Ovary (tissue), 10 donors: ENCODE measurements at regions of chr4 and their contacts with region 1.

Region 1: DNA sequence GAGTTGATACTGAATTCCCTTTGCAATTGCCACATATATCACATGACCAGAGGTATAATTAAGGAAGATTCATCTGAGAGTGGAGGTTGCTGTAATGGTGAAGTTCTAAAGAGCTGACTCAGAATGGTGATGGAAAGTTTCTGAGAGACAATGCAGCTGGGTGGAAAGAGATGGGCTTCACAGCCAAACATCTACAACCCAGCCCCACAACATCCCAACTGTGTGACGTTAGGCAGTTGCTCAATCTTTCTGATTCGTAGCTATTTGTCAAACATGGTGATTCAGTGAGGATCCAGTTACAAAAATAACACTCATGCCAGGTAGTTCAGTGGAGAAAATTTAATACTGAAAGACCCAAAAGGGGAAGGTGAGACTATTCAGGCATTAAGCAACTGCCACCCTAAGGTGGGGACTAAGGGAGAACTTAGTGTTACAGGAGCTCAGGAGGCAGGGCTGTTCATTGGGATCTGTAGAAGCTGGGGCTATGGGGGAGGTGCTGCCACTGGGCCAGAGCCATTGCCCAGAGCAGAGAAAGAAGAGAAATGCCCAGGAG is 6.9 kb upstream of the AFF1 start:
- DNase-seq: peak in 2 of 5 donors; percentile 35 to 77
- H3K4me3 ChIP-seq: no peak overlapping the region
- H3K27ac ChIP-seq: no peak overlapping the region
- H3K4me1 ChIP-seq: no peaks in the 10 kb centered on the region
- H3K27me3 ChIP-seq: no peaks in the 10 kb centered on the region
- CTCF ChIP-seq: no peak
- EP300 ChIP-seq: peak; percentile 84
- POLR2A ChIP-seq: no peak

Region 2: DNA sequence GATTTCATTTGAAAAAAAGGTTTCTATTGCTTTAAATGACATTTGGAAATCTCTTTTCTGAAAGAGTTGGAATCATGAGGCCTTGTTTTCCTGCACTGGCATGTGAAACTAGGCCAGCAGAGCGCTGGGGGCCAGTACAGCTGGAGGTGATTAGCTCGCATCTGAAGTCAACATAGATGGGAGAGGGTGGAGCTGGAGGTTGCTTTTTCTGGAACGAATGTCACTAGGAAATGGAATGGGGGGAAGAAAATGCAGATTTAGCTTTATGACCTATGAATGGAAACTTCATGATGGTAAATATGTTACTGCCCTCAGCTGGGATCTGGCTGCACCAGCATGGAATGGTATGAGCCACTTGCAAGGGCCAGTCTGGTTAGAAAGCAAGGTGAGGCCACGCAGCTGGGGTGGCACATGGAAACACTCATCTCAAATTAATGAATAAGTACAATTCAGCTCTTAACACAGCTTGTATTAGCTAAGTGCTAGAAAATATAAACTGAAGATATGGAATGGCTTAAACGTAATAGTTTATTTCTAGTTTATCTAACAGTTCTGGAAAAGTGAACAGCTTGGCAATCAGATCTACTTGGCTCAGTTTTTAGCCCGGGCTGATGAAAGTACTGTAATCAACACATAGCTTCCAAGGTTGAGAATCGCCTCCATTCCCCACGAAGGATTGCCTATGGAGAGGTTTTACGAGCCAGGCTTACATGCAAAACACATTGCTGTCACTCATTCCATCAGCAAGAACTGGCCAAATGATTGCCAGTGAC is 111.2 kb before region 1 on chr4:
- intact Hi-C with region 1: no loop called
- DNase-seq: peak; percentile 49 to 66 (median 56)
- H3K4me3 ChIP-seq: no peak overlapping the region
- H3K27ac ChIP-seq: peak overlapping the region; percentile 25 to 79
- H3K4me1 ChIP-seq: peaks cover 1% of the 10 kb centered on the region
- H3K27me3 ChIP-seq: no peaks in the 10 kb centered on the region
- CTCF ChIP-seq: no peak
- EP300 ChIP-seq: no peak
- POLR2A ChIP-seq: no peak

Region 3: DNA sequence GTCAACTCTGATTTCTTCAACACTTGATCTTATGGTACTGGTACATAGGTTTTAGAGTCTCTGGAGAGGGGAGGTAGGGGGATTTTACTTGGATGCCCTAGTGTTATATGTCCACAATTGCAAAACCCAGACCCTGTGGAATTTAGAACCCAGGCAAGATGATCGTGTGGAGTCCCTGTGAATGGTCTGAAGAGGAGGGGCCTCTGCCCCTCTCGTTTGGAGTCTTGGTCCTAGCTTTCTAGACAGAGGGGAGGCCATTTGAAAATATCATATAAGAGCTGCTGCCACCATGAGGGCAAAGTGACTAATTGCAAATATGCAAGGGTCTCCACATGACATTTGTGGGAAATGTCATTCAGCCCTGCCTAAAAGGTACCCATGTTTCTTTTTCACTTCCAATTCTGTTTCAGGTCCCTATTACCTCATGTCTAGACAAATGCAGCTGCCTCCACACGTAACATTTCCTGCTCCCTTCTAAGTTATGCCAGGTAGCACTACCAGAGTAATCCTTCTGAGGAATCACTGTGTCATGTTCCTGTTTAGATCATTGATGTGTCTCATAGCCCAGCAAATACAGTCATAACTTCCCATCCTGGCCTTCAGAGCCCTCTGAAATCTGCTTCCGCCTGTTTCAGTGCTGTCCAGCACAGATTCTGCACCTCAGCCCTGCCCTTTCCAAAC is 165.7 kb after region 1 on chr4:
- intact Hi-C with region 1: loop called (anchors 5 to 10 kb)
- DNase-seq: peak in 2 of 5 donors; percentile 37
- H3K4me3 ChIP-seq: no peak overlapping the region
- H3K27ac ChIP-seq: peak overlapping the region in 1 of 2 donors; percentile 18
- H3K4me1 ChIP-seq: peaks cover 2% of the 10 kb centered on the region
- H3K27me3 ChIP-seq: no peaks in the 10 kb centered on the region
- CTCF ChIP-seq: peak; percentile 13 to 54 (median 52)
- EP300 ChIP-seq: no peak
- POLR2A ChIP-seq: no peak

Region 4: DNA sequence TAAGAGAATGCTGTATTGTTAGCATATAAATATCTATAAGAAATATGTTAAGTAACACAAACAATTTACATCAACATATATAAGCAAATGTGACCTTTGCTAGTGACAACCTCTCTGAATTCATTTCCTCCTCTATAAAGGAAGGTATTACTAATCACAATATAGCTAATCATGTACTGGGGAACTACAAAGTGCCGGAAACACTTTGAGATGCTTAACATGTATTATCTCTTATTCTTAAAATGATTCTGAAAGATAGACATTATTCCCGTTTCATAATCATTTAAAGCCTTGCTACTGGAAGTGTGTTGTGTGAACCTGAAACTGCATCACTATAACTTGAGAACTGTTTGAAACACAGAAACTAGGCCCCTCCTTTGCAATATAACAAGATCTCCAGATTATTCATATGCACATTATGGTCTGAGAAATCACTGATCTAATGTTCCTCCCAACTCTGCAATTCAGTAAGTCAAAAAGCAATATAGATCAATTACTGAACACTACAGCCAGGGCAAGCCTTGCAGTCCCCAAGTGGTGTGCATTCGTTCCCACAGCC is 238.5 kb after region 1 on chr4:
- intact Hi-C with region 1: no loop called
- DNase-seq: no peak
- H3K4me3 ChIP-seq: no peak overlapping the region
- H3K27ac ChIP-seq: no peak overlapping the region
- H3K4me1 ChIP-seq: no peaks in the 10 kb centered on the region
- H3K27me3 ChIP-seq: no peaks in the 10 kb centered on the region
- CTCF ChIP-seq: no peak
- EP300 ChIP-seq: no peak
- POLR2A ChIP-seq: no peak